IMR-90 (cell line): ENCODE measurements at regions of chr2 and their contacts with region 1.

Region 1: DNA sequence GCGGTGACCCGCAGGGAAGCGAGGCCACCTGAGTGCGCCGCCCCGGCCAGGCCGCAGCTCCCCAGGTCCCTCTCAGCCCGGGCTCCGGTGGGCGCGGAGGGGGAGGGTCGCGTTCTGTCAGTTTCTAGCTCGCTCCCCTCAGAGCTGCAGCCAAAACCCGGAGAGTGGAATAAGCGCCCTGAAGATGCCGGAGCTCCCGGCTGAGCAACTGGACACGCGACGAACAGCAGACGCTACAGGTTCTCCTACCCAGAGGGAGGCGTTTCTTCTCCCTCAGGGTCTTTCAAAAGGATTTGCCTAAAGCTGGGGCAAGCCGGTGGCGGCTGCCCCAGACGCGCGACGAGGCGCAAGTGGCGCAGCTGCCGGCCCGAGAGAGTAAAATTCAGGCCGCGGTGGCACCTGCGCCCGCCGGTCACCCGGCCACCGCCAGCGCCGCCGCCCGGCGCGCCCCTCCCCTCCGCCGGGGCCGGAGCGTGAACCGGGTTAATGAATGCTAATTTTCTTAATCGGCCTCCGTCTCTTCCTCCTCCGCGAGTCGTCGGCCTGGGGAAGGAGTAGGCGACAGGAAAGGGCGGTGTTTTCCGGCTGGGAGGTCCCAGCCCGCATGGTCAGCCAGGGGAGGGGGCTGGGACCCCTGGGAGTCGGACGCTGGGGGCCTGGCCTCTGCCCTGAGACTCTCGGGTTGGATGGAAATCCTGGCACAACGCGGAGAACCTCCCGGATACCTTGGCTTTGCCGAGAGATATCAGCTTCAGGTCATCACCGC is 845 bp upstream of the CDC42EP3 start:
- DNase-seq: peak; percentile 88
- ATAC-seq: peak; percentile 53
- H3K4me3 ChIP-seq: peak overlapping the region; percentile 99
- H3K27ac ChIP-seq: peak overlapping the region; percentile 87
- H3K4me1 ChIP-seq: peaks cover 7% of the 10 kb centered on the region
- H3K27me3 ChIP-seq: no peaks in the 10 kb centered on the region
- CTCF ChIP-seq: no peak
- POLR2A ChIP-seq: no peak
- RAD21 ChIP-seq: no peak; the same call in 1 of the 2 replicates

Region 2: DNA sequence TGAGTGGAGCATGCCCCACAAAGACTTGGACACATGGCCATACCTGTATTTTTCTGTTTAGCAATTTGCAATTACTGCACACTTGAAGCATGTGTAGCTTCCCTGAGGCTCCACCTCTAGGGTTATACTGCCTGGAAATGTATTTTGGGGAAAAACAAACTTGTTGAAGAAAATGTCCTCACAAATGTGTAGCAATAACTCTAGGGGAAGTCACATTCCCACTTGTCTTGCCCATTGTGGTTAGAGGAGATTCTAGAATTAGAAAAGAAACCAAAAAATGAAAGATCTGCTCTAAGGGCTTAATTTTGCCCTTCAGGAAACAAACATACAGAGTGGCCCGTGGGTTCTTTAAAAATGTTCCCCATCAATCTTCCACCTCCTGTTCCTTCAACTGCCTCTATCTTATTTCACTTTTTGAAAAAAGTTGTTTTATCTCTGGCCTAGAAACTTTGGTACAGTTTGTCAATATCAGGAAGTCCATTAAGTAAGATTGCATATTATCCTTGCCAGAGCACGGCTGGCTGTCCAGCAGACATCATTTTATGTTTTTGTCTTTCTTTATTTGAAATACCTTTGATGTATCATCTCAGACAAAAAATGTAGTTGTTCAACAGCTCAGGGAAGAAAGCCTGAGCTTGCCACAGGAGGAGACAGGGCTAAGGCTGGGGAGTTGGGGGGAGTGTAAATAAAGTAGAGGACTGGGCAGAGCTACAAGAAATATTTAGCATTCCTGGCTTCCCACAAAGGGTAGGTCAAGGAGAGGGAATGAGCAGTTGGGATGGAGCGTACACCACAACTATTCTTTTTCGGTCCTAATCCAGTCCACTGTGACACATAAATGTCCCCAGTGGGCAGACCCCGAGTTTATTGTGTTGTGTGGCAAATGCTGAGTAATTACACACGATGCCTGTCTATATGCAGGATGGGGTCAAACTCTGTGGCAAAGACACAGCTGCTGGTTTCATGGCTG is 96.0 kb after region 1 on chr2:
- CTCF ChIA-PET with region 1: interaction called, 3 read pairs
- POLR2A ChIA-PET with region 1: interaction called, 3 read pairs
- dilution Hi-C with region 1: no loop called
- in situ Hi-C with region 1: no loop called
- intact Hi-C with region 1: loop called (anchors 2 kb)
- DNase-seq: peak; percentile 92
- ATAC-seq: peak; percentile 86
- H3K4me3 ChIP-seq: no peak overlapping the region
- H3K27ac ChIP-seq: peak overlapping the region; percentile 97
- H3K4me1 ChIP-seq: peaks cover 37% of the 10 kb centered on the region
- H3K27me3 ChIP-seq: no peaks in the 10 kb centered on the region
- CTCF ChIP-seq: no peak
- POLR2A ChIP-seq: no peak
- RAD21 ChIP-seq: no peak

Region 3: GRCh38 chr2:37786854-37787253 is 114.6 kb after region 1 on chr2:
- CTCF ChIA-PET with region 1: no interaction called
- POLR2A ChIA-PET with region 1: no interaction called
- dilution Hi-C with region 1: no loop called
- in situ Hi-C with region 1: no loop called
- intact Hi-C with region 1: no loop called
- DNase-seq: no peak
- ATAC-seq: no peak
- H3K4me3 ChIP-seq: no peak overlapping the region
- H3K27ac ChIP-seq: no peak overlapping the region
- H3K4me1 ChIP-seq: peaks cover 20% of the 10 kb centered on the region
- H3K27me3 ChIP-seq: no peaks in the 10 kb centered on the region
- CTCF ChIP-seq: no peak
- POLR2A ChIP-seq: no peak
- RAD21 ChIP-seq: no peak

Region 4: DNA sequence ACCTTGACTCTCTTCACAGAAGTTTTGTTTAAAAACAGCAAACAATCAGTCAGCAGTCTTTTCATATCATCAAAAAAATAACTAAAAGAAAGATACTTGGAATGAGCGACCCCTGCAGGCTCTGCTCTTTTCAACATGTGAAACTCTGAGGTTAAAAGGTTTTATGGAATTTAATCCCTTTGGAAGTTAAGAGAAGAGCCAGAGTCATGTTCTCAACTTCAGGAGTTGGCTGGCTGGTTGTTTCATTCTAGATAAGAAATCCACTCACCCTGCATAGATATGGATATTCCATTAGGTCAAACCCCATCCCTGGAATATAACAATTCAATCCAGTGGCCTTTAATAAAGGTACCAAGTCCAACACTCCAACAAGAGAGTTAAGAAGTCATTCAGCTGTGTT is 137.2 kb after region 1 on chr2:
- CTCF ChIA-PET with region 1: no interaction called
- POLR2A ChIA-PET with region 1: no interaction called
- dilution Hi-C with region 1: no loop called
- in situ Hi-C with region 1: no loop called
- intact Hi-C with region 1: loop called (anchors 1 kb)
- DNase-seq: peak; percentile 65
- ATAC-seq: peak; percentile 70
- H3K4me3 ChIP-seq: no peak overlapping the region
- H3K27ac ChIP-seq: no peak overlapping the region
- H3K4me1 ChIP-seq: peaks cover 8% of the 10 kb centered on the region
- H3K27me3 ChIP-seq: no peaks in the 10 kb centered on the region
- CTCF ChIP-seq: peak; percentile 70
- POLR2A ChIP-seq: no peak
- RAD21 ChIP-seq: peak; percentile 62

Region 5: DNA sequence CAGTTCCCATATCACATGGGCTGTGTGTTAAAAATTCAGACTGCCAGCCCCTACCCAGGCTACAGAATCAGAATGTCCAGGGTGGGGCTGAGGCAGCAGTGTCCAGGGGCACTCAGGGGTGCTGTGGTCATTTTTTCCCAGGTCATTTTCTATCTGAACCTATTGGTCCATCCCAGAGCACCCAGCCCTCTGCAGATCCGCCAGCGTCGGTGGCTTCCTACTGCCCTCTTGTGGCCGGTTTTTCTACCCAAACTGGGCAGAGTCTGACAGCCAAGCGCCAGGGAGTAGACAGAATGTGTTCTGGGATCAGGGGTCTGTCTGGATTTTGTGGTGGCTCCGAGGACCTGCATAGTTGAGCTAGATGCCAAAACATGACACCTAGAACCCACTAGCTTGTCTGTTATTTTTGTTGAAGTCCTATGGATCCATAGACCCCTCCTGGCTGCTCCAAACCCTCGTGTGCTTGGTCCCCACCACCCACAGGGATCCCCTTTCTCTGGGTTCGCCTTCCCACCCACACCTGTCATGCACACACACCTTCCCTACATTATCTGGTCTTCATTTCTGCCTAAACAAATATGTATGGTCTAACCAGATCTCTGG is 218.7 kb after region 1 on chr2:
- CTCF ChIA-PET with region 1: no interaction called
- POLR2A ChIA-PET with region 1: no interaction called
- dilution Hi-C with region 1: no loop called
- in situ Hi-C with region 1: no loop called
- intact Hi-C with region 1: no loop called
- DNase-seq: peak; percentile 62
- ATAC-seq: peak; percentile 91
- H3K4me3 ChIP-seq: no peak overlapping the region
- H3K27ac ChIP-seq: no peak overlapping the region
- H3K4me1 ChIP-seq: no peaks in the 10 kb centered on the region
- H3K27me3 ChIP-seq: 0 out of 2 replicates have a peak, but pooled peaks cover 4% of the 10 kb centered on the region
- CTCF ChIP-seq: peak; percentile 82
- POLR2A ChIP-seq: no peak
- RAD21 ChIP-seq: peak; percentile 82